Transverse colon (tissue), 4 donors: ENCODE measurements at regions of chr1 and their contacts with region 1.

Region 1: DNA sequence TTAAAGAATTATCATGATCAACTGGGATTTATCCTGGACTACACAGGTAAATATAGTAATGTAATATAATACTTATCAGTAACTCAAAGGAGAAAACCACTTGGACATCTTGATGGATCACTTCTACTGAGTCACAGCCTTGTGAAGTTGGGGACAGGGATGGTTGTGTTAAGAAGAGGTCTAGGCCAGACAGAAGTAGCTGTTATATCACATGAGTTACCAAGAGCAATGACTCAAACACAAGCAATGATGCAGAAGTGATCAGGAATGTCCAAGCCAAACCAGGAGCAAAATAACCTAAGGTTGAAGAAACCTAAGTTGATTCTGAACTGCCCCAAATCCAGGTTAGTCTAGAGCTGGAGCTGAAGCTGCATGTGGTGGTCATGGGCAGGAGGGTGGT is 424.5 kb upstream of the DAB1 start:
- DNase-seq: no peak
- H3K4me3 ChIP-seq: no peak overlapping the region
- H3K27ac ChIP-seq: no peak overlapping the region
- H3K4me1 ChIP-seq: no peaks in the 10 kb centered on the region
- H3K27me3 ChIP-seq: no peaks in the 10 kb centered on the region
- CTCF ChIP-seq: no peak
- EP300 ChIP-seq: no peak
- POLR2A ChIP-seq: no peak

Region 2: GRCh38 chr1:57874418-57874877 is 26.0 kb after region 1 on chr1:
- in situ Hi-C with region 1: no loop called
- intact Hi-C with region 1: loop called (anchors 1 kb)
- DNase-seq: no peak
- H3K4me3 ChIP-seq: no peak overlapping the region
- H3K27ac ChIP-seq: no peak overlapping the region
- H3K4me1 ChIP-seq: no peaks in the 10 kb centered on the region
- H3K27me3 ChIP-seq: no peaks in the 10 kb centered on the region
- CTCF ChIP-seq: no peak
- EP300 ChIP-seq: no peak
- POLR2A ChIP-seq: no peak

Region 3: GRCh38 chr1:57916041-57916440 is 67.6 kb after region 1 on chr1:
- in situ Hi-C with region 1: no loop called
- intact Hi-C with region 1: no loop called
- DNase-seq: no peak
- H3K4me3 ChIP-seq: no peak overlapping the region
- H3K27ac ChIP-seq: no peak overlapping the region
- H3K4me1 ChIP-seq: no peaks in the 10 kb centered on the region
- H3K27me3 ChIP-seq: no peaks in the 10 kb centered on the region
- CTCF ChIP-seq: no peak
- EP300 ChIP-seq: no peak
- POLR2A ChIP-seq: no peak

Region 4: DNA sequence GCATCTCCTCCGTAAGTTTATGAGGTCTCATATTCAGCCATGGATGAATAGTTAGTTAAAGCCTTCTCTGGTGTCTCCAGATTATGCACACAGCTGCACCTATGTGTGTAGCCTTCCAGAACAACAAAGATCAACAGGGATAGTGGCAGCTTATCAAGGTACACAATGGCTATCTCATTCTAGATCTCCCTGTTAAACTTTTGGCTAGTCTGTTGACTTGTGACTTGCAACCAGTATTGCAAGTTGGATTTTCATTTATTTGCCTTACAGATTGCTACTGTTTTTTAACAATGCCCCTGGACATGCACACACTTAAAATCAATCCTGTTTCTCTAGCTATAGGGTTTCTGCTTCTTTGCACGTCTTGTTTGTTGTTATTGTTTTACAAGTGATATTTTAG is 334.9 kb after region 1 on chr1:
- in situ Hi-C with region 1: no loop called
- intact Hi-C with region 1: no loop called
- DNase-seq: no peak
- H3K4me3 ChIP-seq: no peak overlapping the region
- H3K27ac ChIP-seq: no peak overlapping the region
- H3K4me1 ChIP-seq: no peaks in the 10 kb centered on the region
- H3K27me3 ChIP-seq: no peaks in the 10 kb centered on the region
- CTCF ChIP-seq: no peak
- EP300 ChIP-seq: no peak
- POLR2A ChIP-seq: no peak